ENCODE measurements at regions of chr5 and their contacts with region 1.

Region 1: DNA sequence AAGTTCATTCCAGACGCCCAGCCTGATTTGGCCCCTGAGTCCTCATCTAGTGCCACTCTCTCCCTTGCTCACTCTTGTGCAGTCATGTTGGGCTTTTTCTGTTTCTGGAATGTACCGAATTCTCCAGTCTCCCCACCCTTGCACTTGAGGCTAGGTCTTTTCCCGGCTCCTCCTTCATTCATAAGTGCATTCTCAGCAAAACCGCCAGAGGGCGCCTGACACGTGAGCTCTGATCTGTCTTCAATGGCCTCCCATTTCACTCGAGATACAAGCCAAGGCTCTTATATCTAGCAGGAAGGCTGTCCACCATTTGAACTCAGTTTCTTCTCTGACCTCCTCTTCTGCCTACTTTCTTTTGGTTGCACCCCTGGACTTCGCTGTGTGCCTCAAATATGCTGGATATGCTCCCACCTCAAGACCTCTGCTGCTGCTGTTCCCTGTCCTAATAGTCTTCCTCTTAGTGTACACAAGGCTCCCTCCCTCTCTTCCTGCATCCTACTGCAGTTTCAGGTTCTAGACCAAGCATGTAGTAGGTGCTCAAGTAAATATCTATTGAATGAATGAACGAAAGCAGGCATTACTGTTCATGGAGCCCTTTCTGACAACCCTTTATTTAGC is 568.1 kb upstream of the WWC1 start:
- DNase-seq: no peak
- H3K4me3 ChIP-seq: no peak overlapping the region
- H3K27ac ChIP-seq: no peak overlapping the region
- H3K4me1 ChIP-seq: peaks cover 0 to 7% (median 0%) of the 10 kb centered on the region in 3 donors
- H3K27me3 ChIP-seq: no peaks in the 10 kb centered on the region
- CTCF ChIP-seq: peak; percentile 52 to 90 (median 84)
- POLR2A ChIP-seq: no peak

Region 2: GRCh38 chr5:168031614-168032013 is 308.3 kb after region 1 on chr5:
- intact Hi-C with region 1: no loop called
- DNase-seq: no peak
- H3K4me3 ChIP-seq: no peak overlapping the region
- H3K27ac ChIP-seq: no peak overlapping the region
- H3K4me1 ChIP-seq: no peaks in the 10 kb centered on the region
- H3K27me3 ChIP-seq: no peaks in the 10 kb centered on the region
- CTCF ChIP-seq: no peak
- POLR2A ChIP-seq: no peak

Region 3: DNA sequence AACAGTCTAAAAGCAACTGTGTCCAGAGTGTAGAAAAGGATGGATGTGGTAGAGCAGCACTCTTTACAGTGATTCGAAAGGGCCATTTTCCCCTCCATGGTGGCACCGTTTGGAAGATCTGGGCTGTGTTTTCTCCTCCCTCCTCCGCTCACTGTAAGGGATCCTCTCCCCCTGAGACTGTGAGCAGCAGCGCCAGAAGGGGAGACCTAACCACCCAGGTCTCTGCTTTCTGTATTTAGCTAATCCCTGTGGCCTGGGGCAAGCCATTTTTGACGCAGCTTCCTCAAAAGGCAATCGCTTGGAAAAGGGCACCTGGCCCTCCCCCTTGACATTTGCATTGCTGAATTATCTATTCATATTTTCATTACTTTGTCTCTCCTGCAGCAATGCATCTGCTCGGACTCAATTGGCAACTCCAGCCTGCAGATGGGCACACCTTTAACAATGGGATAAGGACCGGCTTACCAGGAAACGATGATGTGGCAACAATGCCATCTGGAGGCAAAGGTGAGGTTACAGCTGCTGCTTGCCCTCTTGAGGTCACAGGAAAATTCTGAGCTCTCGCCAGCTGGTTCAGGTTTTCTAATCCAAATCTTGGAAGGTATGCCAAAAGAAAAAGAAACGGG is 323.8 kb after region 1 on chr5:
- intact Hi-C with region 1: loop called (anchors 10 kb)
- DNase-seq: no peak
- H3K4me3 ChIP-seq: no peak overlapping the region
- H3K27ac ChIP-seq: no peak overlapping the region
- H3K4me1 ChIP-seq: peaks cover 0 to 10% (median 0%) of the 10 kb centered on the region in 3 donors
- H3K27me3 ChIP-seq: no peaks in the 10 kb centered on the region
- CTCF ChIP-seq: peak in 5 of 6 experiments; percentile 29 to 70 (median 43)
- POLR2A ChIP-seq: no peak

Measured in esophagus squamous epithelium (tissue), 5 donors.